GM10248 (cell line): ENCODE measurements at regions of chr6 and their contacts with region 1.

Region 1: DNA sequence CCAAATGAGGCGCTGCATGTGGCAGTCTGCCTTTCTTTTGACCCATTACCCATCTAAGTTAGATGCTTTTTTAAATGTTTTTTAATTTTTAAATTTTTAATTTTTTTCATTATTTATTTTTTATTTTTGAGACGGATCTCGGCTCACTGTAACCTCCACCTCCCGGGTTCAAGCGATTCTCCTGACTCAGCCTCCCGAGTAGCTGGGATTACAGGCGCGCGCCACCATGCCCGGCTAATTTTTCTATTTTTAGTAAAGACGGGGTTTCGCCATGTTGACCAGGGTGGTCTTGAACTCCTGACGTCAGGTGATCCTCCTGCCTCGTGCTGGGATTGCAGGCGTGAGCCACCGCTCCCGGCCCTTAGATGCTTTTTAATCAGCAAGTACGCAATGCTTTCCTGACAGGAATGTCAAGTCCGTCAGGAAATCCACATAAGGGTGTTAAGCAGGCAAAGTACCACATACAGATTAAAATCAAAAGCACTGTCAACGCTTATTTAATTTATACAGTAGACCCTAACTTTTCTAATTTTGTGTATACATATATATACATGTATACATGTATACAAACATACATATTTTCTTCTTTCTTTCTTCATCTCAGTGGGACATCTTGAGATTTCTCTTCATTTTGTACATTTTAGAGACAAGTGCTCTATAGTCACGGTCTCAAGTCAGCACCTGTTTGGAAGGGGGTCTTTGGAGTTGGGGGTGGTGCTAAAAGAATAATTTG is 995 bp upstream of the GSTA4 start:
- DNase-seq: no peak
- CTCF ChIP-seq: no peak

Region 2: DNA sequence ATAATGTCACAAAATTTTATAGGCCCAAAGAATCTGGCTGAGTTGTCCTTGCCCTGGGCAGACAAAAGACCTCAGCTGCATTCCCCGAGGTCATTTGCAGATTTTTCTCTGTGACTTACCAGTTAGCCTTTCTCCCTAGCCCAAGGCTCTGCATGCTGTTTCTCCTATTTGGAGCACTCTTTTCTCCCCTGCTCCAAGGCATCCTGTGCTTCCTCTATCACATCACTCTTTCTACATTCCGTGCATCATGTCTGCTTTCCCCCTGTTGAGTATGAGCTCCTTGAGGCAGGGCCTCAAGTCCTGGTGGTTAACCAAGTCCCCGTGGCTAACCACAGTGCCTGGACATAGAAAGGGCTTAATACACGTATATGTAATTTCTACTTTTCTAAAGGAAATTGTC is 86.0 kb before region 1 on chr6:
- CTCF ChIA-PET with region 1: no interaction called
- POLR2A ChIA-PET with region 1: no interaction called
- DNase-seq: no peak
- CTCF ChIP-seq: no peak

Region 3: DNA sequence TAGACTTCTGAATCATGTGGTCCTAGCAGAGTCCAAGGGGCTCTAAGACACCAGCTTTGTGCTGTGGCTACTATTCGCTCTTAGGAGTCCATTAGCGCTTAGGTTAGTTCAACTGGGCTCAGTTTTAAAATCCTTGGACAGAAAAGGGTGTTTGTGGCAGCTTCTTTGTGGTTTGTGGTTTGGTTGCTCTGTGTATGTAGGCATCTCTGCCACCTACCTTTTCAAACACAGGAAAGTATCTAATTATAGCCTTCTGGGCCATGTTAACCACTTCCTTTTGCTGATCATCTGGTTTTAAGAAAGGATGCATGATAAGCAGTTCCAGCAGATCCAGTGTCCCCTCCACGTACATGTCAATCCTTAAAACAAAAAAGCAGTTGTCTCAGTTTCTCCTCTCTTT is 11.8 kb before region 1 on chr6:
- CTCF ChIA-PET with region 1: interaction called, 77 read pairs
- POLR2A ChIA-PET with region 1: no interaction called
- DNase-seq: no peak
- CTCF ChIP-seq: no peak

Region 4: DNA sequence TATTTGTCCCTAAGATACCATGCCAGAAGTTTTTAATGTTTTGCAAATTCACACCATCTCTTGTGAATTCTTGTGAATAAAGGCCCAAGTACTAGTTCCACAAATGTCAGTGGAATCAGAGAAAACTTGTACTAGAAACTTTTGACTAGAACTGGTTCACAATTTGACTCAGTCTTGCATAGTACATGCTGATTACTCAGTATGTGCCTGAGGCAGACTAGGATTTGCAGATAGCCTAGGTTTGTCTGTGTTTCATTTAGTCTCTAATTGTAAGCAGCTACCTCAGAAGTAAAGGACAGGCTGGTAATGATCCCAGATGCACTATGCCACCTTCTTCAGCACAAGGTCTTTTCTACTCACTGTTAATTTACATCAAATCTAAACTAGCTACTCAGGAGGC is 33.2 kb after region 1 on chr6:
- CTCF ChIA-PET with region 1: interaction called, 16 read pairs
- POLR2A ChIA-PET with region 1: no interaction called
- DNase-seq: no peak
- CTCF ChIP-seq: no peak

Region 5: GRCh38 chr6:53066874-53067706 is 71.0 kb after region 1 on chr6:
- CTCF ChIA-PET with region 1: interaction called, 17 read pairs
- POLR2A ChIA-PET with region 1: no interaction called
- DNase-seq: no peak
- CTCF ChIP-seq: peak; percentile 0

Region 6: DNA sequence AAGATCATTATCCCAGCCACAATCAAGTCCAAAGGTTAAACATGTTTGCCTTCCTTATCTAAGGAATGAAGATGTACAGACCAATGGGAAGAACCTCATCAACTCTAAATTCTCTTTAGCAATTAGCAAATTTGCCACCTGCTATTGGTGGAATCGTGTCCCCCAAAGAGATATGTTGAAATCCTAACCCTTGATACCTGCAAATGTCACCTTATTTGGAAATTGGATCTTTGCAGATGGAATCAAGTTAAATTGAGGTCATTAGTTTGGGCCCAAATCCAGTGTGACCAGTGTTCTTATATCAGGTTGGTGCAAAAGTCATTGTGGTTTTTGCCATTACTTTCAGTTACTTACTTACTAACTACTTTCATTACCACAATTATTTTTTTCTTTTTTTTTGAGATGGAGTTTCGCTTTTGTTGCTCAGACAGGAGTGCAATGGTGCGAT is 638.1 kb after region 1 on chr6:
- CTCF ChIA-PET with region 1: no interaction called
- POLR2A ChIA-PET with region 1: no interaction called
- DNase-seq: no peak
- CTCF ChIP-seq: no peak